ENCODE measurements at regions of chr1 and their contacts with region 1.

Region 1: GRCh38 chr1:56584910-56585528 is 5.7 kb upstream of the PLPP3 start:
- DNase-seq: no peak
- ATAC-seq: no peak
- H3K4me3 Mint-ChIP-seq: no peak overlapping the region
- H3K27ac Mint-ChIP-seq: no peak overlapping the region
- H3K4me1 Mint-ChIP-seq: no peaks in the 10 kb centered on the region
- H3K27me3 Mint-ChIP-seq: peaks cover 8% of the 10 kb centered on the region

Region 2: DNA sequence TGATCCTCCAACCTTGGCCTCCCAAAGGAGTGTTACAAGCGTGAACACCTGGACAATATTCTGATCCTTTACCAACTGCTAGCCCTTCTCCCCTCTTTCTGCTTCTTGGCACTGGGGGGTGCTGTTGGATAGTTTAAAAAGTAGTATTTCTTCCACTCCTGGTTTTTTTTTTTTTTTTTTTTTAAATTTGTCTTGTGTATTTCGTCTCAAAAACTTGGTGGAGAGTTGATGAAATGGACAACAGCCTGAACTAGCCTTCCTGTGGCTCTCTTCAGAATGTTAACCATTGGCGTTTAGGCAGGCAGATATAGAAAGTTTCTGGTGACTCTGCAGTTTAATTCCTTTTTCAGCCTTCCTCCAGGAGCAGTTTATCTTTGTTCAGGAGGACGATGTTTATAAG is 1300.2 kb before region 1 on chr1:
- CTCF ChIA-PET with region 1: interaction called, 12 read pairs
- POLR2A ChIA-PET with region 1: no interaction called
- DNase-seq: no peak
- ATAC-seq: no peak
- H3K4me3 Mint-ChIP-seq: no peak overlapping the region
- H3K27ac Mint-ChIP-seq: no peak overlapping the region
- H3K4me1 Mint-ChIP-seq: peaks cover 3% of the 10 kb centered on the region
- H3K27me3 Mint-ChIP-seq: peaks cover 11% of the 10 kb centered on the region

Region 3: DNA sequence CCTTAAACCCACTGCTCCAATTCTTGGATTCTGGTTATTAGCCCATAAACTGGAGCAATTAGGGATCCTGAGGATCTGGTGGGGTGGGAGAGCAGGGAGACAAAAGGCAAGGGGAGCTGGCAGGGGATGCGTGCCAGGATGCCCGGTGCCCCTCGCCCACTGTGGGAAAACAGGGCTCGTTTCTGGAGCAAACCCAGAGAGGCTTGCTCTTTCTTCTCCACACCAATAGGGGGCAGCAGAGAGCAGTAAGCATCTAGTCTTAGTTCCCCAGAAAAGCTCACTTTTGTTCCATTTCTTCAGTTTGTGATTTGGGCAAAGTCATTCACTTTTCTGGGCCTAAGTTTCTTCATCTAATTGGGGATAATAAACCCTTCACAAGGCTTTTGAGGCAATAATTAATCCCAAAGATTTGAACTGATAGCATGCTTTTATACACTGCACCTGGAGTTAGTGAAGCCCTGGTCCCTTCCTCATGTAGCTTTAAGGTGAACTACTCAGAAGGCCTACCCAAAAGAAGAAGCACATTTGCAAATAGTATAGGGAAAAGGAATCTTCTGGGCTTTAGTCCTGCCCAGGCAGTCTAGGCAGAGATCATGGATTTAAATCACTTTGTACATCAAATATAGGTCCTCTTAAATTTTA is 1209.3 kb before region 1 on chr1:
- CTCF ChIA-PET with region 1: interaction called, 12 read pairs
- POLR2A ChIA-PET with region 1: no interaction called
- DNase-seq: peak; percentile 56
- ATAC-seq: peak; percentile 49
- H3K4me3 Mint-ChIP-seq: no peak overlapping the region
- H3K27ac Mint-ChIP-seq: no peak overlapping the region
- H3K4me1 Mint-ChIP-seq: no peaks in the 10 kb centered on the region
- H3K27me3 Mint-ChIP-seq: no peaks in the 10 kb centered on the region

Region 4: DNA sequence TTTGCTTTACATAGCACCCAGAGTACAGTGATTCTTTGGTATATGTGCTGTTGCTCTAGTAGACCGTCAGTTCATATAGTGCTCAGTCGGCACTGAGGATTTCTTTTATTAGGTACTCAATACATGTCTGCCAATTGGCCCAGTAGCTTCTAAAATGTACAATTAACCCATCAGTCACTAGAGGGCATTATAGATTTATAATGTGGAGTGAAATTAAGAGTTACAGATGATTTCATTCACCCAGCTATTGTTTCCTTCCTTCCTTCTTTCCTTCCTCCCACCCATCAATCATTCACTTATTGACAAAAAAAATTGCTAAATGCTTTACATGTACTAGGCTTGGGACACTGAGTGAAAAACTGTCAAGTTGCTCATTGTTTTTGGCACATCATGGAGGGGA is 1106.3 kb before region 1 on chr1:
- CTCF ChIA-PET with region 1: interaction called, 11 read pairs
- POLR2A ChIA-PET with region 1: no interaction called
- DNase-seq: no peak
- ATAC-seq: no peak
- H3K4me3 Mint-ChIP-seq: no peak overlapping the region
- H3K27ac Mint-ChIP-seq: no peak overlapping the region
- H3K4me1 Mint-ChIP-seq: no peaks in the 10 kb centered on the region
- H3K27me3 Mint-ChIP-seq: peaks cover 5% of the 10 kb centered on the region